ENCODE measurements at regions of chr12 and their contacts with region 1.

Region 1: DNA sequence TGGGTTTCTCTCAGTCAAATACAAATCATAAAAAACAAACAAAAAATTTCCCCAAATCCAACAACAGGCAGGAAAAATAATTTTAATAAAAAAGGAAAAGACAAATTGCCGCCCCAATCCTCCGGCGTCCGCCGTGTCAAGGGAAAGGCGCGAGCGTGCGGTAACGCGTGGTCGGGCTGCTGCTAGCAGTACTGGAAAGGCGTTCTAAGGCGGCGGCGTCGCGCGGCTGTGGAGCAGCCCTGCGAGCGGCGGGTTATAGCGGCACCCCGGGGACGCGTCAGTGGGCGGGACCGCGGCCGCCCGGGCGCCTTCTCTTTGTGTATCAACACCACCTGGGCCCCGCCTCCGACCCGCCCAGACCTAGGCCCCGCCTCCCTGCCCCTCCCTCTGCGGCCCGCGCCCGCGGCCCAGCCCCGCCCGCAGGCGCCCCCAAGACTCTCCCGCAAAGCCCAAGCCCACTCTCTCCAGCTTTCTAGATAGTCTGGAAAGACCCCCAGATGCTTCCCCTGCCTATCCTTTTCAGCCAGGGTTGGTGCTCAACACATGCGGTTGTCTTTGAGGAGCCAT is at the start of gene SLC38A2:
- DNase-seq: peak; percentile 92
- H3K4me3 Mint-ChIP-seq: peak within 1 kb of the TSS; percentile 93
- H3K27ac Mint-ChIP-seq: peak within 1 kb of the TSS; percentile 98
- H3K4me1 Mint-ChIP-seq: peaks cover 12% of the 10 kb centered on the region
- H3K27me3 Mint-ChIP-seq: no peaks in the 10 kb centered on the region
- CTCF ChIP-seq: no peak
- total RNA-seq, gene SLC38A2: 817 and 1,070 TPM in 2 replicates

Region 2: GRCh38 chr12:45990468-45991283 is 382.0 kb before region 1 on chr12 and contains the start of gene SCAF11:
- CTCF ChIA-PET with region 1: interaction called, 4 read pairs
- POLR2A ChIA-PET with region 1: interaction called, 15 read pairs
- intact Hi-C with region 1: loop called (anchors 5 kb)
- DNase-seq: peak; percentile 99
- H3K4me3 Mint-ChIP-seq: peak within 1 kb of the TSS; percentile 91
- H3K27ac Mint-ChIP-seq: peak within 1 kb of the TSS; percentile 93
- H3K4me1 Mint-ChIP-seq: peaks cover 31% of the 10 kb centered on the region
- H3K27me3 Mint-ChIP-seq: no peaks in the 10 kb centered on the region
- CTCF ChIP-seq: peak; percentile 85
- total RNA-seq, gene SCAF11: 106 and 107 TPM in 2 replicates

Region 3: GRCh38 chr12:46357438-46358324 is 14.9 kb before region 1 on chr12:
- CTCF ChIA-PET with region 1: interaction called, 4 read pairs
- POLR2A ChIA-PET with region 1: interaction called, 302 read pairs
- intact Hi-C with region 1: no loop called
- DNase-seq: peak; percentile 72
- H3K4me3 Mint-ChIP-seq: no peak overlapping the region
- H3K27ac Mint-ChIP-seq: peak overlapping the region; percentile 7
- H3K4me1 Mint-ChIP-seq: peaks cover 18% of the 10 kb centered on the region
- H3K27me3 Mint-ChIP-seq: no peaks in the 10 kb centered on the region
- CTCF ChIP-seq: no peak

Region 4: GRCh38 chr12:46430340-46430948 is 57.8 kb after region 1 on chr12:
- CTCF ChIA-PET with region 1: interaction called, 4 read pairs
- POLR2A ChIA-PET with region 1: interaction called, 41 read pairs
- intact Hi-C with region 1: loop called (anchors 1 kb)
- DNase-seq: peak; percentile 93
- H3K4me3 Mint-ChIP-seq: peak overlapping the region; percentile 61
- H3K27ac Mint-ChIP-seq: peak overlapping the region; percentile 95
- H3K4me1 Mint-ChIP-seq: peaks cover 33% of the 10 kb centered on the region
- H3K27me3 Mint-ChIP-seq: no peaks in the 10 kb centered on the region
- CTCF ChIP-seq: no peak

Region 5: GRCh38 chr12:46492471-46493351 is 120.1 kb after region 1 on chr12:
- CTCF ChIA-PET with region 1: interaction called, 4 read pairs
- POLR2A ChIA-PET with region 1: interaction called, 42 read pairs
- intact Hi-C with region 1: no loop called
- DNase-seq: peak; percentile 88
- H3K4me3 Mint-ChIP-seq: peak overlapping the region; percentile 61
- H3K27ac Mint-ChIP-seq: peak overlapping the region; percentile 100
- H3K4me1 Mint-ChIP-seq: peaks cover 32% of the 10 kb centered on the region
- H3K27me3 Mint-ChIP-seq: no peaks in the 10 kb centered on the region
- CTCF ChIP-seq: no peak

Region 6: GRCh38 chr12:46661110-46661845 is 288.7 kb after region 1 on chr12:
- CTCF ChIA-PET with region 1: interaction called, 11 read pairs
- POLR2A ChIA-PET with region 1: interaction called, 497 read pairs
- intact Hi-C with region 1: loop called (anchors 1 kb)
- DNase-seq: peak; percentile 79
- H3K4me3 Mint-ChIP-seq: no peak overlapping the region
- H3K27ac Mint-ChIP-seq: peak overlapping the region; percentile 80
- H3K4me1 Mint-ChIP-seq: peaks cover 63% of the 10 kb centered on the region
- H3K27me3 Mint-ChIP-seq: no peaks in the 10 kb centered on the region
- CTCF ChIP-seq: peak; percentile 57